Posterior vena cava (tissue), 2 donors: ENCODE measurements at regions of chr3 and their contacts with region 1.

Region 1: DNA sequence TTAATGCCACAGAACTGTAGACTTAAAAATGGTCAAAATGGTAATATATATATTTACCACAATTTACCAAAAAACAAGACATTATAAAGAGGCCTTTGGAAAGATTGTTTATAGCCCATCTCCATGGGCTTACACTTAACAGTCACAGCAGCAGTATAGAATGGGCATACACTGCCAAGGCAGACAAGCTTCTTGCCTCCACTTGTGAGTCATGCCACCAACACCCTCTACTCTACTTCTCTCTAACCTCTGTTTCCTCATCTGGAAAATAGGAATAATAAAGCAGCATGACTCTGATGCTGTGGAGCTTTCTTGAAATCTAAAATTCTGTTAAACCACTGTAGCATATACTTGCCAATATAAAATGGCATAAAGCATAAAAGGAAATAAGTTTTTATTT is 14.4 kb upstream of the GPR156 start:
- DNase-seq: no peak

Region 2: DNA sequence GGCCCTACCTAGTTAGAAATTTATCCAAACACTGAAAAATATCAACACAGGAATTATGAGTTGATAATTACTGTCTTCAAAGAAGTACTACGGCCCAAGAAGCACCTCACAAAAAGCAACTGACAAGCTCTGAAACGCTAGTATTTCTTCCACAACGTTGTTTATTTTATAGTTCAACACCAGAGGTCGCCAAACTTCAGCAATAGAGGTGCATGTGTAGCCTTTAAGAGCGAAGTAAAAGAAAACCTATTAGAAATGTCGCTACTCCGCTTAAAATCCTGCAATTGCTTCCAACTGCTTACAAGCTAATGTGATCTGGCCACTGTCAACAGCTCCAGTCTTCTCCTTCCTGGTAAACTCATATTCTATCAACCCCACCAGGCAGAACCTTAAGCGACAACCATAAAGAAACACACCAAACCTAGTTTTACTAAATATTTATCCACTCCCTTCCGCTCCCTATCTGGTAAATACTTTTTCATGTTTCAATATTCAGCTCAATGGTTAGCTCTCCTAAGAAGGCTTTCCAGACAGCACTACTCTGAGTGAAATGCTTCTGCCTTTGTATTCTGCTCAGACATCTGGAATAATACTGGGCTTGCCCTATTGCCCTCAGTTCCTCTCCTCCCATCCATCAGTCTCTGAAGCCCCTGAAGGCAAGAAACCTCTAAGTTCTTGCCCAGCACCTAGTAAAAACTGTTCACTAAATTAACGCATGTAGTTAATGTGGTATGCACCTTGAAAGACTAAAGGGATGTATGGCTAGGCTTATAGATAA is 407.3 kb before region 1 on chr3:
- intact Hi-C with region 1: no loop called
- DNase-seq: no peak

Region 3: GRCh38 chr3:119978554-119979208 is 320.7 kb before region 1 on chr3:
- intact Hi-C with region 1: loop called in 1 of 2 experiments (anchors 5 kb)
- DNase-seq: no peak